CD14-positive monocyte (primary cell): ENCODE measurements at regions of chr10 and their contacts with region 1.

Region 1: GRCh38 chr10:32378363-32379317 is 31.7 kb upstream of the EPC1 start:
- DNase-seq: peak; percentile 84 to 87 (median 85)
- H3K4me3 ChIP-seq: peak overlapping the region; percentile 74 to 97 (median 87)
- H3K4me3 Mint-ChIP-seq: no peak overlapping the region
- H3K27ac ChIP-seq: peak overlapping the region; percentile 65 to 93
- H3K27ac Mint-ChIP-seq: no peak overlapping the region
- H3K4me1 ChIP-seq: peaks cover 8 to 18% of the 10 kb centered on the region in 2 donors
- H3K4me1 Mint-ChIP-seq: peaks cover 13% of the 10 kb centered on the region
- H3K27me3 ChIP-seq: no peaks in the 10 kb centered on the region
- H3K27me3 Mint-ChIP-seq: peaks cover 0 to 1% (median 1%) of the 10 kb centered on the region in 3 donors
- CTCF ChIP-seq: no peak

Region 2: DNA sequence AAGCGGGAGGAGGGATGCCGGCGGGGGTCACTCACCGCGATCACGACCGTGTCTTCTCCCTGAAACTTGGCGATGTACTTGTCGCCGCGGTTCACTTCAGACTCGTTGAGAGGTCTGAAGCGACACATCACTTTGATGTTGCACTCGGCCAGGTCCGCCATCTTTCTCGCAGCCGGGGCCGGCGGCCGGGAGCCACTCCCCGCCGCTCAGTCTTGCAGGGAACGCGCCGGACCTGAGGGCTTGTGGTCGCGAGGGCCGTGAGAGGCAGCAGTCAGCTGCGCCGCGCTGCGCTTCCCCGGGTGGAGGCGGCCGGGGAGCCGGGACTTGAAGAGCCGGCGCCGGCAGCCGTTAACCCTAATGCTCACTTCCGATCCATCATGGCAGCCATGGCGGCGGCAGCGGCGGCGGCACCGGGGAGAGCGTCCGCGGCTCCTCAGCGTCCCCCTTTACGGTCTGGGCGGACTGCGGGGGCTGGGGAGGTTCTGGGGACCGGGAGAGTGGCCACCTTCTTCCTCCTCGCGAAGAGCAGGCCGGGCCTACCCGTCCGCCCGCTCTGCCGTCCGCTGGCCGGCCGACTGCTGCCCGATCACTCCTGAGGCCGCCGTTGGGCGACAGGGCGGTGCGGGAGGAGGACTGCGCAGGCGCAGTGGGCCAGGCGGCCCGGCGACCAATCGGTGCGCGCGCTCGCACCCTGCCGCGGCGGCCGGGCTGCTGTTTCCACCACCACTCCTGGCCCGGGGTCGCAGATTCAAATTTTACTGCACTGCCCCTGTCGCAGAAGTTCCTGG is 322.6 kb before region 1 on chr10 and contains the start of gene KIF5B:
- intact Hi-C with region 1: loop called in 1 of 2 experiments (anchors 10 kb)
- DNase-seq: peak; percentile 83 to 87 (median 85)
- H3K4me3 ChIP-seq: peak within 1 kb of the TSS; percentile 81 to 98 (median 98)
- H3K4me3 Mint-ChIP-seq: peak within 1 kb of the TSS; percentile 95 to 97
- H3K27ac ChIP-seq: peak within 1 kb of the TSS; percentile 93 to 94
- H3K27ac Mint-ChIP-seq: peak within 1 kb of the TSS; percentile 89 to 97 (median 92)
- H3K4me1 ChIP-seq: peaks cover 45 to 61% of the 10 kb centered on the region in 2 donors
- H3K4me1 Mint-ChIP-seq: peaks cover 56% of the 10 kb centered on the region
- H3K27me3 ChIP-seq: no peaks in the 10 kb centered on the region
- H3K27me3 Mint-ChIP-seq: peaks cover 0 to 1% (median 0%) of the 10 kb centered on the region in 3 donors
- CTCF ChIP-seq: no peak
- polyA plus RNA-seq, gene KIF5B: 15.2 to 32.9 (median 18.9) TPM